ENCODE measurements at regions of chr14 and their contacts with region 1.

Region 1: GRCh38 chr14:88181072-88181471 is 142.0 kb downstream of the KCNK10 start:
- DNase-seq: no peak
- CTCF ChIP-seq: no peak

Region 2: GRCh38 chr14:88043529-88044443 is 137.3 kb before region 1 on chr14:
- CTCF ChIA-PET with region 1: no interaction called
- POLR2A ChIA-PET with region 1: no interaction called
- DNase-seq: no peak
- CTCF ChIP-seq: no peak

Region 3: GRCh38 chr14:88063845-88064244 is 117.2 kb before region 1 on chr14:
- CTCF ChIA-PET with region 1: no interaction called
- POLR2A ChIA-PET with region 1: interaction called, 11 read pairs
- DNase-seq: no peak
- CTCF ChIP-seq: no peak

Measured in GM10248 (cell line).